MCF 10A (cell line): ENCODE measurements at regions of chr5 and their contacts with region 1.

Region 1: DNA sequence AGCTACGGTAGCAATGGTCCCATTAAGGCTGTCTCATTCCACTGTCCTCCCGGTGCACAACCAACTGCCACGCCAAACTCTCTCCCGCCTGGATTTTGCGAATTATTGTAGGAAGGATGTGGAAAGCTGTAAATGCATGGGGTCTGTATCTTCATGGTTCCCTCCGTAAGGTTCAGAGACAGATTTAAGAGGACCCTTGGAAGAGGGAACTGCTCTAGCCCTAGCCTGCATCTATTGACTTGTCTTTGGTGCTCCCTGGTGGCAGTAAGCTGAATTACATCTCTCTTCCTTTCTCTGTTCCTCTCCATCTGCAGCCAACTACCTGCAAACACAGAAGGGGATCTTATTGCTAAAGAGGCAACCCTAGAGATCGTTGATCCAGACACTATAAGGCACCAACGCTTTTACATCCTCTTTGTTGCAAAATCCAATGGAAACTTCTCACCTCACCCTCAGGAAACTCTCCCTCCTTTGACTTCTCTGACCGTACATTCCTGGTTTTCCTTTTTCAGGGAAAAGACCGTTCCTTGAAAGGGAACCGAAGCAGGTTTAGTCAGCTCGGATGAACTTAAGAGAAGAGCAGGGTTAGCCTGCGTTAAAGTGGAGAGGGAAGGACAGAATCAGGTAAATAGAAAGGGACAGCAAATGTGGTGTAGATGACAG is 11.9 kb downstream of the CAPSL start:
- DNase-seq: peak; percentile 67
- H3K4me3 Mint-ChIP-seq: no peak overlapping the region
- H3K27ac Mint-ChIP-seq: no peak overlapping the region
- H3K4me1 Mint-ChIP-seq: peaks cover 30% of the 10 kb centered on the region
- H3K27me3 Mint-ChIP-seq: peaks cover 39% of the 10 kb centered on the region
- CTCF ChIP-seq: peak; percentile 91

Region 2: GRCh38 chr5:35089334-35090314 is 836.9 kb before region 1 on chr5:
- CTCF ChIA-PET with region 1: interaction called, 58 read pairs
- POLR2A ChIA-PET with region 1: no interaction called
- intact Hi-C with region 1: loop called (anchors 1 kb)
- DNase-seq: peak; percentile 77
- H3K4me3 Mint-ChIP-seq: no peak overlapping the region
- H3K27ac Mint-ChIP-seq: no peak overlapping the region
- H3K4me1 Mint-ChIP-seq: no peaks in the 10 kb centered on the region
- H3K27me3 Mint-ChIP-seq: no peaks in the 10 kb centered on the region
- CTCF ChIP-seq: peak; percentile 86

Region 3: GRCh38 chr5:35230038-35230631 is 696.4 kb before region 1 on chr5 and contains the start of gene PRLR:
- CTCF ChIA-PET with region 1: interaction called, 45 read pairs
- POLR2A ChIA-PET with region 1: no interaction called
- intact Hi-C with region 1: loop called (anchors 1 kb)
- DNase-seq: peak; percentile 85
- H3K4me3 Mint-ChIP-seq: peak within 1 kb of the TSS; percentile 64
- H3K27ac Mint-ChIP-seq: no peak within 1 kb of the TSS
- H3K4me1 Mint-ChIP-seq: peaks cover 18% of the 10 kb centered on the region
- H3K27me3 Mint-ChIP-seq: peaks cover 39% of the 10 kb centered on the region
- CTCF ChIP-seq: no peak
- total RNA-seq, gene PRLR: 0.16 and 0.44 TPM in 2 replicates

Region 4: GRCh38 chr5:35651002-35651756 is 275.3 kb before region 1 on chr5:
- CTCF ChIA-PET with region 1: interaction called, 233 read pairs
- POLR2A ChIA-PET with region 1: interaction called, 4 read pairs
- intact Hi-C with region 1: loop called (anchors 1 kb)
- DNase-seq: peak; percentile 68
- H3K4me3 Mint-ChIP-seq: no peak overlapping the region
- H3K27ac Mint-ChIP-seq: no peak overlapping the region
- H3K4me1 Mint-ChIP-seq: no peaks in the 10 kb centered on the region
- H3K27me3 Mint-ChIP-seq: no peaks in the 10 kb centered on the region
- CTCF ChIP-seq: peak; percentile 49

Region 5: DNA sequence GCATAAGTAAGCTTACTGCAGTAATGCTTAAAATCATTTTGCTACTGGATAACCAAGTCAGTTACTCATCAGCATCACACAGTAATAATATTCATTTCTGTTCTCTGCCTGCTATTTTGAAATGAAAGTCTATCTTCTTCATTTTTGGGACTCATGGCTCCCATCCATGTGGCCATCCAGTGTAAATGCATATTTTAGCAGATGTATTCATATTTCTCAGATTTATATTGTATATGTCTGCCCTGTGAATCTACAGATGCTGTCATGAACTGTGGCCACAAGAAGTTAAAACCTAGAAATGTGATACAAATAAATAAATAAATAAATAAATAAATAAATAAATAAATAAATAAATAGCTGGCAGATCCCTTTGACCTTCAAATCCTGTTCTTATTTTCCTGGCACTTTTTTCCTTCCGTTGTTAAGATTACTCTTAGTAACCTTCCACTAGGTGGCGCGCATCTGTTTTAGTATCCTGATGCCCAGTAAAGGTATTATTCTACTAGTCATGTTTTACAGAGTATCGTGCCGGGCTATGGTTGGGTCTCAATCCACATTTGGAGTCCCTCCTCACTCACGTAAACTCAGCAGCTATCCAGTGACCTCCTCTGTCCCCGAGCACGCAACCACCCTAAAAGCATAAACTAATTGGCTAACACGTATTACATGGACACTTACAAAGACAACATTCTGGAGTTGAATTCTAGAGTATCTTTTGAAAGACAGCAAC is 149.0 kb before region 1 on chr5:
- CTCF ChIA-PET with region 1: interaction called, 160 read pairs
- POLR2A ChIA-PET with region 1: interaction called, 5 read pairs
- intact Hi-C with region 1: loop called (anchors 1 kb)
- DNase-seq: peak; percentile 87
- H3K4me3 Mint-ChIP-seq: no peak overlapping the region
- H3K27ac Mint-ChIP-seq: no peak overlapping the region
- H3K4me1 Mint-ChIP-seq: peaks cover 34% of the 10 kb centered on the region
- H3K27me3 Mint-ChIP-seq: no peaks in the 10 kb centered on the region
- CTCF ChIP-seq: peak; percentile 47

Region 6: GRCh38 chr5:35938568-35939227 is 12.2 kb after region 1 on chr5 and contains the start of gene CAPSL:
- CTCF ChIA-PET with region 1: interaction called, 41 read pairs
- POLR2A ChIA-PET with region 1: no interaction called
- intact Hi-C with region 1: no loop called
- DNase-seq: peak; percentile 57
- H3K4me3 Mint-ChIP-seq: no peak within 1 kb of the TSS
- H3K27ac Mint-ChIP-seq: no peak within 1 kb of the TSS
- H3K4me1 Mint-ChIP-seq: no peaks in the 10 kb centered on the region
- H3K27me3 Mint-ChIP-seq: peaks cover 34% of the 10 kb centered on the region
- CTCF ChIP-seq: no peak
- total RNA-seq, gene CAPSL: not detected in 2 replicates

Region 7: DNA sequence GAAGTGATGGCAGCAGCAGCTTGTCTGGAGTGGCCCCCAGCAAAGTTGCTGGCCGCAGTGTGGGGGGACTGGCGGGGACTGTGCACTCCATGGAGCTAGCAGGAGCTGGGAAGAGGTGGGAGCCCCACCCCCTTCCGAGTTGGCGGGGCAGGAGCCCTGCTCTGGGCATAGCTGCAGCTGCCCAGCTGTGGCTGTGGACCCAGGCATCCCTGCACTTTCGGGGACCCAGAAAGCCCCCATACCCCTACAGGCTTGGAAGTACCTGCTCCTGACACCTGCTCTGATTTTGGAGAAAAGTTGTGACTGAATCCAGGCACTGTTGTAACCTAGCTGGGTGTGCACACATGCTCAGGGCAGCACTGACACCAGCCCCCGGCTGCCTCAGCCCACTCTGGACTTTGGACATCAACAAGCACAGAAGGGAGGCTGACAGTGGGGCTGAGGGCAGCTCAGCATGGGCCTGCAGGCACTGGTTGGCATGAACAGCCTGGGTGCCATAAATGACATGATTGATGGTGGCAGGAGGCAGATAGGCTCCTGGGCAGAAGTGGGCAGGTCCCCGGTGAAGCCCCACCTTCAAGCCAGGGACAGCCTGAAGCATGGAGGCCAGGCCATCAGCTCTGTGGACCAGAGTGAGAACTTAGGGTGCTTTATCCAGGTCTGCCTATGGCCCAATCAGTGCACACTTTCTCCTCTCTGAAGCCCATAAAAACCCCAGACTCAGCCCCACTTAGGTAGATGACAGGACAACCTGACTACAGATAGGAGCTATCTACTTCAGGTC is 212.6 kb after region 1 on chr5:
- CTCF ChIA-PET with region 1: no interaction called
- POLR2A ChIA-PET with region 1: no interaction called
- intact Hi-C with region 1: no loop called
- DNase-seq: no peak
- H3K4me3 Mint-ChIP-seq: no peak overlapping the region
- H3K27ac Mint-ChIP-seq: no peak overlapping the region
- H3K4me1 Mint-ChIP-seq: no peaks in the 10 kb centered on the region
- H3K27me3 Mint-ChIP-seq: no peaks in the 10 kb centered on the region
- CTCF ChIP-seq: no peak